ENCODE measurements at regions of chr2 and their contacts with region 1.

Region 1: GRCh38 chr2:75466708-75467311 is 93.9 kb downstream of the EVA1A start:
- DNase-seq: peak; percentile 18
- H3K4me3 ChIP-seq: no peak overlapping the region
- H3K27ac ChIP-seq: no peak overlapping the region
- H3K4me1 ChIP-seq: no peaks in the 10 kb centered on the region
- H3K27me3 ChIP-seq: peaks cover 5 to 24% of the 10 kb centered on the region in 2 experiments
- CTCF ChIP-seq: peak; percentile 44
- POLR2A ChIP-seq: no peak

Region 2: DNA sequence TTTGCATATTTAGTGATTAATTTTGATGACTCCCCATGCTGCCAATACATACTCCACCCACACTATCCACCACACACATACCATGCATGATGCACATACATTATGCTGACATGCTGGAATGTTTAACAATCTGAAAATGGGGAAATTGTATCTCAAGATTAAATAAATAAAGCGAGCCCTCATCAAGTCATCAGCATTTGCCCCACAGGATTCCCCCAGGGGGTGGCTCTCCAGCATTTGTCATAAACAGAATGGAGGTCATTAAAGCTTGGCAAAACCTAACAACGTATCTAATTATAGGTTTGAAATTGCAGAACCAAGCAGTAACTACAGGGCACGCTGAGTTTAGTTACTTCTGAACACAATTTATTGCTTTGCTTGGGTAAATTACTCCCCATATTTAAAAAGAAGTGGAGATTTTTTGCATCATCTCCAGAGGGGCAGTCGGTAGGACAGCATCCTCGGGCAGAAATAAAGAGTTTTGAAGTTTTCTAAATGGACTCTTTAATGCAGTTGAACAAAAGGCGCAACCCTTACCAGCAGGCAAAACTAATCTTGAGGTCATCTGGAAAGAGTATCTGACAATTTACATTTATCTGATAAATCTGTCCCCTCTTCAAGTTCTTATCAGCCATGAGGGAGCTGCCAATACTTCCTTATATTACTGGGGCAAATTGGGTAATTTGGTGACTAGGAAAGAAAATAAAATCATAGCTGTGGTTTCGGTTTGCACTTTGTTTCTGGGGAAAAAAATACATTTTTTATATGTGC is 126.1 kb before region 1 on chr2:
- CTCF ChIA-PET with region 1: no interaction called
- POLR2A ChIA-PET with region 1: no interaction called
- dilution Hi-C with region 1: no loop called
- intact Hi-C with region 1: no loop called
- DNase-seq: no peak
- H3K4me3 ChIP-seq: no peak overlapping the region
- H3K27ac ChIP-seq: no peak overlapping the region
- H3K4me1 ChIP-seq: no peaks in the 10 kb centered on the region
- H3K27me3 ChIP-seq: no peaks in the 10 kb centered on the region
- CTCF ChIP-seq: no peak
- POLR2A ChIP-seq: no peak

Region 3: DNA sequence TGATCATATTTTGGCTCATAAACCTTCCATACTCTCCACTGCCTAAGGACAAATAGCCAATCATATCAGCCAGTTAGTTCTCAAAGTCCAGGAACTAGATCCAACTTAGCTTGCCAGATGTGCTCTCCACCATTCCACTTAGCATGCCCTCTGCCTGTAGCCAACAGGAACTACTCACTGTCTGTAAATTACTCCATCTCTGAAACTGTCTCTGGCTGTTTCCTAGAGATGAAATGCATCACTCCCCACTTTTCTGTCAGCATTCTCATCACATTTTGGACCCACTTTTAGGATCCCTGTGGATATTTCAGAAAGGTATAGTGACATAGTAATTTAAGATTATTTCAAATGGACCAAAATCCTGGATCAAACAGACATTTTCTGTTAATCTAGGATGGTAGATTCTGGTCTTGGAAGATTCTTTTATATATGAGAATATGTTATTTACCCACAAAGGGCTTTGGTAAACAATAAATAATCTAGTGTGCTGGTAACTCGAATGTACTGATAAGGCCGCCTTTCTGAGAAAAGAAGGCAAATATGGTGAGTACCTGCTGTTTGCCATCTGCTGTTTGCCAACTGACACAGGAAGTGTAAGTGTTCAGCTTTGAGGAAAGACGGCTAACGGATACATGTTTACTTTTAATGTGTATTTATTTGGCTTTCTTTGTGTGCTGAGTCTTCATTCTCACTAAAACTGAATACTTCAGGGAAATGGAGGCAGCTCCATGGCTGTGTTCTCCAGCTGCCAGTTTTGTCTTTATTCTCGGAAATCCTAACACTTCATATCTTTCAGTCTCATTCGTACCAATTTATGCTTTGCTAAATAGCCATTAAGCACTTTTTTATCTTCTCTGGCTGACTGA is 14.4 kb after region 1 on chr2:
- CTCF ChIA-PET with region 1: interaction called, 11 read pairs
- POLR2A ChIA-PET with region 1: no interaction called
- dilution Hi-C with region 1: no loop called
- intact Hi-C with region 1: no loop called
- DNase-seq: no peak
- H3K4me3 ChIP-seq: no peak overlapping the region
- H3K27ac ChIP-seq: no peak overlapping the region
- H3K4me1 ChIP-seq: no peaks in the 10 kb centered on the region
- H3K27me3 ChIP-seq: peaks cover 4 to 7% of the 10 kb centered on the region in 2 experiments
- CTCF ChIP-seq: peak in 1 of 2 donors; percentile 17
- POLR2A ChIP-seq: no peak

Region 4: GRCh38 chr2:75548036-75548573 is 81.3 kb after region 1 on chr2:
- CTCF ChIA-PET with region 1: interaction called, 4 read pairs
- POLR2A ChIA-PET with region 1: no interaction called
- dilution Hi-C with region 1: no loop called
- intact Hi-C with region 1: loop called (anchors 5 kb)
- DNase-seq: peak; percentile 34
- H3K4me3 ChIP-seq: no peak overlapping the region
- H3K27ac ChIP-seq: peak overlapping the region; percentile 51
- H3K4me1 ChIP-seq: peaks cover 12% of the 10 kb centered on the region
- H3K27me3 ChIP-seq: no peaks in the 10 kb centered on the region
- CTCF ChIP-seq: no peak
- POLR2A ChIP-seq: no peak

Region 5: GRCh38 chr2:75595551-75596395 is 129.0 kb after region 1 on chr2:
- CTCF ChIA-PET with region 1: interaction called, 18 read pairs
- POLR2A ChIA-PET with region 1: no interaction called
- dilution Hi-C with region 1: loop called (anchors 25 kb)
- intact Hi-C with region 1: no loop called
- DNase-seq: peak; percentile 64
- H3K4me3 ChIP-seq: no peak overlapping the region
- H3K27ac ChIP-seq: peak overlapping the region; percentile 63
- H3K4me1 ChIP-seq: peaks cover 3% of the 10 kb centered on the region
- H3K27me3 ChIP-seq: no peaks in the 10 kb centered on the region
- CTCF ChIP-seq: no peak
- POLR2A ChIP-seq: no peak

Region 6: DNA sequence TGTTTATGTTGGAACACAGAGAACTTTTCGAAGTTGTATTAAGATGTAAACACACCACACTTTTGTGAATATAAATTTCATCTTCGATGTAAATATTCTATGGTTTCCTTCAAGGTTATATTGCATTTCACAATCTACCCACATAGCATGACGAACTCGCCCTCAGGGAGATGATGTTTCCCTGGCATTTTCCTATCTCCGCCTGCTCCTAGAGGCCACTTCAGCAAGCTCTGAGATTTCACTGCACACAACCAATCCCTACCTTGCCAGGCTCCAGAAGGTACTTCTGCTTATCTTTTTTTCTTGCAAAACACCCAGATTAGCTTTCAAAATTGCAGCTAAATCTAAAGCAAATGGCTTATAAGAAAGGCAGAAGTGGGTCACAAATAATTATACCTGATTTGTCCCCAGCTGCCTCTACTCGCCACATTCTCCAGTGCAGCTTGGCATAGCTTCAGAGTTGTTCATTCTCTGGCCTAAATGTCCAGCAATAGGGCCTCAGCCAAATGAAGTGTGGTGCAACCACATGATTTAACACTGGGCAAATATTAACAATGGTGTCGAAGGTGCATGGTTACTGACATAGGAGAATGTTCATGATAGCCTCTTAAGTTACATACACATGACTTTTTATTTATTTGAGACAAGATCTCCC is 147.4 kb after region 1 on chr2:
- CTCF ChIA-PET with region 1: interaction called, 228 read pairs
- POLR2A ChIA-PET with region 1: no interaction called
- dilution Hi-C with region 1: loop called (anchors 25 kb)
- intact Hi-C with region 1: loop called (anchors 1 kb)
- DNase-seq: no peak
- H3K4me3 ChIP-seq: no peak overlapping the region
- H3K27ac ChIP-seq: no peak overlapping the region
- H3K4me1 ChIP-seq: no peaks in the 10 kb centered on the region
- H3K27me3 ChIP-seq: peaks cover 7 to 14% of the 10 kb centered on the region in 2 experiments
- CTCF ChIP-seq: no peak
- POLR2A ChIP-seq: no peak

Region 7: GRCh38 chr2:75627895-75628504 is 161.2 kb after region 1 on chr2:
- CTCF ChIA-PET with region 1: interaction called, 217 read pairs
- POLR2A ChIA-PET with region 1: no interaction called
- dilution Hi-C with region 1: loop called (anchors 25 kb)
- intact Hi-C with region 1: loop called (anchors 1 kb)
- DNase-seq: peak; percentile 78
- H3K4me3 ChIP-seq: no peak overlapping the region
- H3K27ac ChIP-seq: no peak overlapping the region
- H3K4me1 ChIP-seq: no peaks in the 10 kb centered on the region
- H3K27me3 ChIP-seq: peaks cover 10 to 19% of the 10 kb centered on the region in 2 experiments
- CTCF ChIP-seq: peak; percentile 92 to 94
- POLR2A ChIP-seq: no peak

Region 8: DNA sequence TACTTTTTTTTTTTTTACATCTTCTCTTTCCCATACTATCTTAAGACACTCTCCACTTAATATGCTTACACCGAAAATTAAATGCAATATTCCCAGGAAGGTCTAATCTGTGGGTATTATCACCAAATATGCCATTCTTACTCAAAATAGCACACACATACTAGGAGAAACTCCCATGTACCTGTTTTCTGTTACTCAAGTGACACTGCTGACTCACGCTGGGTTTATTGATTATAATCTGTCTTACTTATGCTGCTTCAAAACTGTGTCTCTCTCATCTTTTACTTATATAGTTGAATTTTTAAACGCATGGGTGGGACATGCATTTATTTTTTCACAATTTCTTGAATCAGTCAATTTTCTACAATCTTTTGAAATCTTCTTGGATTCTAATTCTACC is 209.7 kb after region 1 on chr2:
- CTCF ChIA-PET with region 1: interaction called, 3 read pairs
- POLR2A ChIA-PET with region 1: no interaction called
- dilution Hi-C with region 1: no loop called
- intact Hi-C with region 1: loop called (anchors 1 kb)
- DNase-seq: no peak
- H3K4me3 ChIP-seq: no peak overlapping the region
- H3K27ac ChIP-seq: no peak overlapping the region
- H3K4me1 ChIP-seq: no peaks in the 10 kb centered on the region
- H3K27me3 ChIP-seq: no peaks in the 10 kb centered on the region
- CTCF ChIP-seq: no peak
- POLR2A ChIP-seq: no peak